ENCODE measurements at regions of chr12 and their contacts with region 1.

Region 1: DNA sequence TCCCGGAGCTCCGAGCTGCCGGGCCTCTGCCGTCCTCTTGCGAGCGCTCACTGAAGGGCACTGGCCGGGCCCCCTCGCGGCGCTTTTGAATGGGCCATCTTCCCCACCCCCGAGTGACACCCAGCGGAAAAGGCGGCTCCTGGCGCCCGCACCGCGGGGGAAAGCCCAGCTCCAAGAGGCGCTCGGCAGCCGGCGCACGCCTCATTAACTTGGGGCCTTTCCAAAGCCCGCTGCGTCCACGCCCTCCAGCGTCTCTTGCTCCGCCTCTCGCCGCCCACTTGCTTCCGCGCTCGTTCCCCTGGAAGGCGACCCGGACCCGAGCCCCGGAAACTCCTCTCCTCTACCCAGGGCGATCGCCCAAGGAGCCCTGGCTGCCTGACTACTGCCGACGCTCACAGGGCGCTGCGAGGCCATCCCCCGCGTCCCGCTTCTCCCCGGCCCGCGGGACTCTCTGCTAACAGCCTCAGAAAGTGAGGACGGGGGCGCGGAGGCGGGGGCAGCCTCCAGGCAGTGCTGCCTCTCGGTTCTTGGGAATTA is at the start of gene PHLDA1:
- DNase-seq: peak; percentile 88
- H3K4me3 ChIP-seq: peak within 1 kb of the TSS; percentile 47 to 69
- H3K27ac ChIP-seq: peak within 1 kb of the TSS; percentile 85 to 92
- H3K4me1 ChIP-seq: no peaks in the 10 kb centered on the region
- H3K27me3 ChIP-seq: no peaks in the 10 kb centered on the region
- CTCF ChIP-seq: peak in 3 of 4 experiments; percentile 18 to 80 (median 78)
- POLR2A ChIP-seq: peak; percentile 81
- total RNA-seq, gene PHLDA1: 8.8 to 11.8 TPM

Region 2: DNA sequence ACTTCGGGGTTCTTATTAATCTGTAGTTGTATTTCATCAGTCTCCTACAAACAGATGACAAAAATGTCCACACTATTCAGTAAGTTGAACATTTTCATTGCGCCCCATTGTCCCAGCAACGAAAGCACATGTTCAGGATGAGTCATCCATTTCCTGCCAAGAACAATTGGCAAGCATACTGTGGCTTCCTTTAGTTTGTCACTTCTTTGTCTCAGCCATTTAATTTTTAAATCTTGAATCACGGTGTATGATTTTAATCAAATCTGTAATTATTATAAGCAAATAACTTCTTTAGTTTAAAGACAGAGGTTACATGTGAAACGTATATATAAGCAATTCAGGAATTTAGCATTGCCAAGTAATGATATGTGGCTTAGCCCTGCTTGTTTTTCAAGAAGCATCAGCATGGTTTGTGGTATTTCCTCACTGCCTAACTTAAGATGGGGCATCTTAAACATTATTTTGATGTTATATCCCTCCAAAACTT is 308.8 kb before region 1 on chr12:
- intact Hi-C with region 1: loop called (anchors 10 kb)
- DNase-seq: peak; percentile 69
- H3K4me3 ChIP-seq: no peak overlapping the region
- H3K27ac ChIP-seq: peak overlapping the region in 1 of 2 donors; percentile 23
- H3K4me1 ChIP-seq: peaks cover 7% of the 10 kb centered on the region
- H3K27me3 ChIP-seq: no peaks in the 10 kb centered on the region
- CTCF ChIP-seq: no peak
- POLR2A ChIP-seq: no peak

Region 3: GRCh38 chr12:75738486-75738885 is 293.1 kb before region 1 on chr12:
- intact Hi-C with region 1: no loop called
- DNase-seq: no peak
- H3K4me3 ChIP-seq: no peak overlapping the region
- H3K27ac ChIP-seq: no peak overlapping the region
- H3K4me1 ChIP-seq: no peaks in the 10 kb centered on the region
- H3K27me3 ChIP-seq: no peaks in the 10 kb centered on the region
- CTCF ChIP-seq: no peak
- POLR2A ChIP-seq: no peak

Region 4: GRCh38 chr12:75820848-75821578 is 210.6 kb before region 1 on chr12:
- intact Hi-C with region 1: loop called (anchors 5 kb)
- DNase-seq: no peak
- H3K4me3 ChIP-seq: no peak overlapping the region
- H3K27ac ChIP-seq: no peak overlapping the region
- H3K4me1 ChIP-seq: no peaks in the 10 kb centered on the region
- H3K27me3 ChIP-seq: no peaks in the 10 kb centered on the region
- CTCF ChIP-seq: no peak
- POLR2A ChIP-seq: no peak

Region 5: DNA sequence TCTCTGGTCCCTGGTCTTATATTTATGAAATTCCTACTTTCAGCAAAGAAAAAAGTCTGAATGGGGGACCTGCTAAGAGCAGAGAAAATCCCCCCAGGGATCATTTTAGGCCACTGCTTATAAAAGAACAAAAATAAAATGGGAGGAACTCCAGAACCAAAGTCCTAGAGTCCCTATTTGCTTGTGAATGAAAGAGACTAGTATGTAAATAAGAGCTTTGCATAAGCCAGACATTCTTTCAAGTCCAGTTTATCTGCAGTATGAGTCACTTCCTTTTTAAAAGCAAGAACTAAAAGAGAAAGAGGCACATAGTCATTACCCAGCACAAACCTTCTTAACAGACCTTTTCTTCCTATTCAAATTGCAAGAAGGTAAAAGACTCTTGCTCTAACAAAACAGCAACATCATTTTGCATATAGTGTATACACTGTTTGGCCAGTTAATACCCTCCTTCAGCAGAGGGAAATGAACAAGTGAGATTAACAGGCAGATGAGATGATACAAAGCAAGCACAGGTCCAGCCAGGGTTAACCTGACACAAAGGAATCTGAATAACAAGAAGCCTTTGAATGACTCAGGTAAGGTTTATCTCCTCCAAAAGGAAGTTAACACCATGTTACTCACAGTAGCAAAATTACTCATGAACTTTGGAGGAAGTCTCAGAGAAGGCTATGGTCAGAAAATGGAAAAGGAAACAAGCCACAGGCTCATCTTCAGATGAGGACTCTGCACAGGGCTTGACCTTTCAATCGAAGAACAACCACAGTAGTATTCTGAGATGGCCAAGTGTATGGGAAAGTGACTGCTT is 87.3 kb before region 1 on chr12:
- intact Hi-C with region 1: no loop called
- DNase-seq: no peak
- H3K4me3 ChIP-seq: no peak overlapping the region
- H3K27ac ChIP-seq: no peak overlapping the region
- H3K4me1 ChIP-seq: no peaks in the 10 kb centered on the region
- H3K27me3 ChIP-seq: no peaks in the 10 kb centered on the region
- CTCF ChIP-seq: no peak
- POLR2A ChIP-seq: no peak

Region 6: DNA sequence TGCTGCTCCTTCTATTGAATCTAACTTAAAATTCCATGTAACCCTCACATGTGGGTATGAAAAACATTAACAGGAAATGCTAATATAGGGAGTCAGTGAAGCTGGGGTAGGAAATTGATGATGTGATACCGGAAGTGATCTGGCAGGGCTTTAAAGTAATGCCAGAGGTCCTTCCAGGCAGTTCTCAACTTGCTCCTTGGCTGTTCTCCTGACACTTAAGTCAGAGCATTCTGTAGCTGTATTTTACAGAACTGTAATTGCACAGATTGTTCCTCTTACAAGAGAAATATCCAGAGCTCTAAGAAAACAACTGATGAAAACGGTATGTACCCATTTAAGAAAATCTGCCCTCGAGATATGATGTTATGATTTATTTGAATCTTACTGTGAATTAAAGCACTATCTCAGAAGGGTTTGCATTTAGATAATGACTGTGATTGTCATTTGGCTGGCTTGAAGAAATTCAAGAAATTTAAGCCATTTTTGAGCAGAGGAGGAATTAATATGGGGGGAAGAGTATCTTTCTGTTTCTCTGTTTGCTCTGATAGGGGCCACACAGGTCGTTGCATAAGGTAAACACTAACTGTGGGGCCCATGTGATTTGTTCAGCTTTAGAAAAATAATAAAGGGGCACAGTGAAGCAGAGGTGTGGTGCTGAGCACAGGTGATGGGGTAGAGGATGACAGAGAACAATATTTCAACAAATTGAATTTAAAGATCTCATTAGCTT is 228.2 kb after region 1 on chr12:
- intact Hi-C with region 1: loop called (anchors 5 kb)
- DNase-seq: peak; percentile 34
- H3K4me3 ChIP-seq: no peak overlapping the region
- H3K27ac ChIP-seq: peak overlapping the region; percentile 65 to 72
- H3K4me1 ChIP-seq: no peaks in the 10 kb centered on the region
- H3K27me3 ChIP-seq: no peaks in the 10 kb centered on the region
- CTCF ChIP-seq: no peak
- POLR2A ChIP-seq: no peak

Region 7: DNA sequence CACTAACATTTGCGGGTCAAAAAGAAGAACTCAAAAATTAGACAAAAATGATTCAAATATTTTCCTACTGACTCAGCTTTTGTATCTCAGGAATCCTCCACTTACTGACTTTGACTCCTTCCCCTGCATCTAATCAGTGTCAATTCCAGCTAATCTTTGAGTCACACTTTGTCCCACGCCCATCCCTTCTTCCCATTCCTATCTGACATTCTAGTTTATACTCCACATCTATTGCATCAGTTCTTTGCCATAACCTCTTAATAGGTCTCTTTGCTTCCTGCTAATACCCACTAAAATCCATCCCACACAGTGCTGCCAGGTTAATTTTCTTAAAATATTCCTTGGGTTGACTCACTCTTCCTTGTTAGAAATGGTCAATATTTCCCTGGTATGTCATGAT is 297.6 kb after region 1 on chr12:
- intact Hi-C with region 1: no loop called
- DNase-seq: no peak
- H3K4me3 ChIP-seq: no peak overlapping the region
- H3K27ac ChIP-seq: no peak overlapping the region
- H3K4me1 ChIP-seq: no peaks in the 10 kb centered on the region
- H3K27me3 ChIP-seq: no peaks in the 10 kb centered on the region
- CTCF ChIP-seq: no peak
- POLR2A ChIP-seq: no peak

Region 8: GRCh38 chr12:76559400-76560085 is 527.9 kb after region 1 on chr12 and contains the start of gene OSBPL8:
- intact Hi-C with region 1: loop called (anchors 10 kb)
- DNase-seq: peak; percentile 95
- H3K4me3 ChIP-seq: peak within 1 kb of the TSS; percentile 75 to 89
- H3K27ac ChIP-seq: peak within 1 kb of the TSS; percentile 83 to 94
- H3K4me1 ChIP-seq: no peaks in the 10 kb centered on the region
- H3K27me3 ChIP-seq: no peaks in the 10 kb centered on the region
- CTCF ChIP-seq: peak in 1 of 4 experiments; percentile 43
- POLR2A ChIP-seq: peak; percentile 84
- total RNA-seq, gene OSBPL8: 50.6 to 54.2 TPM